Activated CD4-positive, alpha-beta memory T cell treated with anti-CD3 and anti-CD28 coated beads for 36 hours (primary cell): ENCODE measurements at regions of chr5 and their contacts with region 1.

Region 1: GRCh38 chr5:143213851-143214363 is 189.6 kb downstream of the NR3C1 start:
- DNase-seq: peak; percentile 63
- H3K4me3 Mint-ChIP-seq: no peak overlapping the region
- H3K27ac Mint-ChIP-seq: peak overlapping the region; percentile 79
- H3K4me1 Mint-ChIP-seq: peaks cover 57% of the 10 kb centered on the region
- H3K27me3 Mint-ChIP-seq: no peaks in the 10 kb centered on the region

Region 2: DNA sequence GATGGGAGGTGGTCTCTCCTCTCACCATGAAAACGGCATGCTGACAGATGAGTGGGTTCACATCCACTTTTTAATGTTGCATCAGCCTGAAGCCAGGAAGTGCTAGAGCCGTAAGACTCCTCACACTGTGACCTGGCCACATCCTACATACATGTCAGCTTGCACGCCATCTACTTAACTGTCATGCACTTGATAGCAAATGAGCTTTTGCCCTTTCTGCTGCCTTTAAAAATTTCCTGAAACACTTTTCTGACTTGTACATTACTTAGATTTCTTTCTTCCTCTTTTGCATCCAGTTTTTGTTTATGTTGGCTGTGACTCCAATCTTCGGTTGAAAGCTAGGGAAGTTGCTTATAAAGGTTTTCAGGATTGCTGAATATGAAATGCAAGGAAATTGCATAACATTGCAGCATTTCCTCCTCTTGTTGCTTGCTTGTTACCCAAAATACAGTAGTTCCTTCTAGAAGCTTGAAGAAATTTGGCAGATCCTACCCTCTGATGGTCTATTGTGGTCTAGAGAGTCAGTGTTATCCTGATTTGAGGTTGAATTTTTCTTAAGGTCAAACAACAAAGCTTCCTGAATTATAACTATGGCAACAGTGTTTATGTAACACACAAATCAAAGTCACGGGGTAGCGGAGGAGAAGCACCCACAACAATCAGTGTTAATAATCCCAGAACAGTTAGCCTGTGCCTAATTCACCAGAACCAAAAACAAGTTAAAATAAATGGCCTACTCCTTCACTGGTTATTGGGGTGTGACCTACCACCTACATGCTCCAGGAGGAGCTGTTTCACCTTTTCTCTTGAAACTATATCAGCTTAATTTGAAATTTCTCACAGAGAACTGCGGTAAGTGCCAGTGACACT is 211.2 kb before region 1 on chr5:
- CTCF ChIA-PET with region 1: interaction called, 9 read pairs
- POLR2A ChIA-PET with region 1: no interaction called
- intact Hi-C with region 1: loop called (anchors 1 kb)
- DNase-seq: peak; percentile 79
- H3K4me3 Mint-ChIP-seq: peak overlapping the region; percentile 52
- H3K27ac Mint-ChIP-seq: peak overlapping the region; percentile 91
- H3K4me1 Mint-ChIP-seq: peaks cover 56% of the 10 kb centered on the region
- H3K27me3 Mint-ChIP-seq: no peaks in the 10 kb centered on the region

Region 3: DNA sequence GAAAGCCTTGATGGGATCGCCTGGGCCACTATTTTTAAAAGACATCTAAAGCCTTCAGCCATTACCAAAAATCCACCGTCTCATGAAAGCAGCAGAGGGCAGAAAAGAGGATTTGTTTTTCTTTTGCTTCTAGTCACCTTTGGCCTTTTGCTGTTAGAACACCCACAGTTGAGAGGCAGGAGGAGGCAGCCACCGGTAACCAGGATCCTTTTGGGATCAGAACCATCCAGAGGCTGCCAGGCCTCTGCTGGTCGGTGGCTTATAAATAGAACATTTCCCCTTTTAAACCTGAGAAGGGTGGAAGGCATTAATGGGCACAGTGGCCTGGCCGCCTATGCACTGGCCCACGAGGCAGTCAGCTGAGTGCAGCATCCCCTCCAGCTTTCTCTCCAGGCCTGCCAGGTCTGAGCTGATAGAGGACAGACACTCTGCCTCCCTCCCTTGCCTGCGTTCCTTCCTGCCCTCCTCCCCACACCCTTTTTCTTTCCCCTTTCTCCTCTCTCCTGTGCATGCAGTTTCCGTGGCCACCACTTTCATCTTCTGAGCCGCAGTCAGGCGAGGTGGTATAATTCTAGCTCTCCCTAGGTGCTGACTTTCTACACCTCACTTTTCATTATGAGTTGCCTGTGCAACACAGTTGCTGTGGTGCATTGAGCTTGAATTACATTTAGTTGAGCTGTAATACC is 190.4 kb before region 1 on chr5:
- CTCF ChIA-PET with region 1: interaction called, 3 read pairs
- POLR2A ChIA-PET with region 1: no interaction called
- intact Hi-C with region 1: loop called (anchors 2 kb)
- DNase-seq: peak; percentile 85
- H3K4me3 Mint-ChIP-seq: no peak overlapping the region
- H3K27ac Mint-ChIP-seq: peak overlapping the region; percentile 59
- H3K4me1 Mint-ChIP-seq: peaks cover 53% of the 10 kb centered on the region
- H3K27me3 Mint-ChIP-seq: no peaks in the 10 kb centered on the region

Region 4: GRCh38 chr5:143196601-143197259 is 17.2 kb before region 1 on chr5:
- CTCF ChIA-PET with region 1: no interaction called
- POLR2A ChIA-PET with region 1: no interaction called
- intact Hi-C with region 1: loop called (anchors 1 kb)
- DNase-seq: no peak
- H3K4me3 Mint-ChIP-seq: peak overlapping the region; percentile 14
- H3K27ac Mint-ChIP-seq: no peak overlapping the region
- H3K4me1 Mint-ChIP-seq: peaks cover 17% of the 10 kb centered on the region
- H3K27me3 Mint-ChIP-seq: no peaks in the 10 kb centered on the region

Region 5: DNA sequence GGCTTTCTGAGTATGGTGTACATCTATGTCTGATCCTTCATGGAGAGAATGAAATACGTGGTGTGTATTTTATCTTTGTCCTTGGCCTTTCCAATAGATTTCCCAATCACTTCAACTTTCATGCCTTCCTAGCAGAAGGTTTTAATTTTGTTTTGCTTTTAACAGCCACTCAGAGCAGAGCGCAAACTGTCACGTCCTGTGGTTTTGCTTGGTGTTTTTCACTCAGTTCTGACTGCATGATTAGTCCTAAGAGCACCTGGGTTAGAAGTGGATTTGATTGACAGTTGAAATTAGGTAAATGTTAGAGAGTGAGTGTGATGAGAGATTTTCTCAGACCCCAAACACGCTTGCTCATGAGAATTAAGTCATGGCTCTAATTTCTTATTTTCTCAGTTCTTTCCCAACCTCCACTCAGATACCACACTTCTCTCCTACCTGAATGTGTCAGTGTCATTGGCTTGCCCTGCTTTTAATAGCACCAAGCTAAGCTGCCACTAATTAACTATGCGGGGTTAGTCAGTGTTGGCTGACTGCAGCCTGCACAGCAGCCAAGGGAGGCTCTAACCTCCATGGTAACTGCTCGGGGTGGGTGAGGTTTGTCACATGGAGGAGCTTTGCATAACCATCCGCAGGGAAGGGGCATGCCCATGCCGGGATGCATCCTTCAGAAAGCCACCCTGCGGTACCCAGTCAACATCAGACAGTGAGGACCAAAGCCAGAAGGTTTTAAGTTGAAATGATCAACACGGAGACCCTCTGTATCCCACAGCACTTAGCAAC is 16.2 kb after region 1 on chr5:
- CTCF ChIA-PET with region 1: interaction called, 3 read pairs
- POLR2A ChIA-PET with region 1: interaction called, 12 read pairs
- intact Hi-C with region 1: loop called (anchors 1 kb)
- DNase-seq: peak; percentile 71
- H3K4me3 Mint-ChIP-seq: peak overlapping the region; percentile 63
- H3K27ac Mint-ChIP-seq: peak overlapping the region; percentile 81
- H3K4me1 Mint-ChIP-seq: peaks cover 29% of the 10 kb centered on the region
- H3K27me3 Mint-ChIP-seq: no peaks in the 10 kb centered on the region

Region 6: GRCh38 chr5:143314659-143315058 is 100.8 kb after region 1 on chr5:
- CTCF ChIA-PET with region 1: no interaction called
- POLR2A ChIA-PET with region 1: interaction called, 3 read pairs
- intact Hi-C with region 1: loop called (anchors 5 kb)
- DNase-seq: no peak
- H3K4me3 Mint-ChIP-seq: no peak overlapping the region
- H3K27ac Mint-ChIP-seq: peak overlapping the region; percentile 6
- H3K4me1 Mint-ChIP-seq: peaks cover 66% of the 10 kb centered on the region
- H3K27me3 Mint-ChIP-seq: no peaks in the 10 kb centered on the region

Region 7: DNA sequence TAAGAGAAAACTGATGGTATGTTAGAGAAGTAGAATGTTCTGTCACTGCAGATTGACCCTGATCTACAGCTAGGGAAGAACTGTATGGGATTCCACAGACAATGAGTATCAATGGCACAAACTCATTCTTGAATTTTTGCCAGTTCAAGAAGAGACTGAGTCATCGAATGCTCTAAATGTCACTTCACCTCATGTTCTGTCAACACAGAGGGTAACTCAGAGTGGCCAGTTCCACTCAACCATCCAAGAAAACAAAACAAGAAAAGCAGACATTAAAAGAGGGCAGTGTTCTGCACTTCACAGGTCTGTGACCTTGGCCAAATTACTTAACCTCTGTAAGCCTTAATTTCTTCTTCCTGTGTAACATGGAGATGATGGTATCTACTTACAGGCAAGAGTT is 465.9 kb after region 1 on chr5:
- CTCF ChIA-PET with region 1: no interaction called
- POLR2A ChIA-PET with region 1: no interaction called
- intact Hi-C with region 1: loop called (anchors 10 kb)
- DNase-seq: no peak
- H3K4me3 Mint-ChIP-seq: no peak overlapping the region
- H3K27ac Mint-ChIP-seq: no peak overlapping the region
- H3K4me1 Mint-ChIP-seq: peaks cover 23% of the 10 kb centered on the region
- H3K27me3 Mint-ChIP-seq: peaks cover under 1% of the 10 kb centered on the region

Region 8: GRCh38 chr5:143896966-143897365 is 683.1 kb after region 1 on chr5:
- CTCF ChIA-PET with region 1: no interaction called
- POLR2A ChIA-PET with region 1: no interaction called
- intact Hi-C with region 1: no loop called
- DNase-seq: no peak
- H3K4me3 Mint-ChIP-seq: no peak overlapping the region
- H3K27ac Mint-ChIP-seq: no peak overlapping the region
- H3K4me1 Mint-ChIP-seq: peaks cover 27% of the 10 kb centered on the region
- H3K27me3 Mint-ChIP-seq: no peaks in the 10 kb centered on the region